ENCODE measurements at regions of chr15 and their contacts with region 1.

Region 1: DNA sequence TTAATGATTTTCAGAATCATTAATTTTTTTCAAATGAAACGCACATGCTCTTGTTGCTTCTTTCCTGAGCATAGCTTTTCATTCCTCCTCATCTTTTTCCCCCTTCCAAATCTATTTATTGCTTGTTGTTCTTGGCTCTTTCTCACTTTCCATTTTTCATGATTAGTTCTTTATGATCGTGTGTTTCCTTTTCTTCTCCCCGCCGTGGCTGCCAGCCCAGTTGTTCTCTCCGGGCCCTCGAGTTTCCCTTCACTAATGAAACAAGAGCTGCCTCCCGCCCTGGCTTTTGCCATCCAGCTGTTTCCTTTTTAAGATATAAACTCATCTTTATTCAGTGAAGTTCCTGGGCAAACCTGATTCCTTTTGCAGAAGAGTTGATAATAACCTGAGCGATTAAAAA is 170.2 kb upstream of the NR2F2 start:
- DNase-seq: no peak

Region 2: GRCh38 chr15:96303503-96304056 is 143.3 kb after region 1 on chr15:
- intact Hi-C with region 1: loop called (anchors 10 kb)
- DNase-seq: no peak